ENCODE measurements at regions of chr7 and their contacts with region 1.

Region 1: GRCh38 chr7:139645572-139646523 is 122.4 kb downstream of the CLEC2L start:
- DNase-seq: peak; percentile 65
- ATAC-seq: peak; percentile 59
- H3K4me3 Mint-ChIP-seq: no peak overlapping the region
- H3K27ac Mint-ChIP-seq: no peak overlapping the region
- H3K4me1 Mint-ChIP-seq: peaks cover 39% of the 10 kb centered on the region
- H3K27me3 Mint-ChIP-seq: no peaks in the 10 kb centered on the region
- CTCF ChIP-seq: peak; percentile 79

Region 2: DNA sequence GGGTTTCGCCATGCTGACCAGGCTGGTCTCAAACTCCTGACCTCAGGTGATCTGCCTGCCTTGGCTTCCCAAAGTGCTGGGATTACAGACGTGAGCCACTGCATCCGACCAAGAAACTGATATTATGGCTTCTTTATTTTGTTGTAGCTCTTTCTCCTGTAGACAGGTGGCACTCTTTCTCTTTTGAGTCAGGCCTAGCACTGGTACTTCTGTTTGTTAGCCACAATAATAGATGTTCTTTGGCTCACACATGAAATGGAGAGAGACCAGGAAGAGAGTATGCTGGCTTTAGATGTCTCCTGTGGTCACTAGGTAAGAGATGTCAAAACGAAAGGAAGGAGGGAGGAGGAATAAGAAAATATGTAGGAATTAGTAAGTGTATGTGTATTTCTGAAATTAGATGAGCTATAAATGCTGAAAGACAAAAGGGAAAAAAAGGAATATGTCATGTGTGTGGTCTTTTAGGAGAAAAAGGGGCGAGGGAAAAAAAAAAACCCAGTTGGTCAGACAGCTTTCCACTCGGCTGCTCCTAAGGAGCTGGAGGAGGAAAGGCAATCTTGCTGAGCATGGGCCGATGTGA is 43.6 kb before region 1 on chr7:
- CTCF ChIA-PET with region 1: interaction called, 11 read pairs
- POLR2A ChIA-PET with region 1: no interaction called
- intact Hi-C with region 1: loop called (anchors 2 kb)
- DNase-seq: no peak
- ATAC-seq: no peak
- H3K4me3 Mint-ChIP-seq: no peak overlapping the region
- H3K27ac Mint-ChIP-seq: no peak overlapping the region
- H3K4me1 Mint-ChIP-seq: no peaks in the 10 kb centered on the region
- H3K27me3 Mint-ChIP-seq: no peaks in the 10 kb centered on the region
- CTCF ChIP-seq: no peak

Region 3: DNA sequence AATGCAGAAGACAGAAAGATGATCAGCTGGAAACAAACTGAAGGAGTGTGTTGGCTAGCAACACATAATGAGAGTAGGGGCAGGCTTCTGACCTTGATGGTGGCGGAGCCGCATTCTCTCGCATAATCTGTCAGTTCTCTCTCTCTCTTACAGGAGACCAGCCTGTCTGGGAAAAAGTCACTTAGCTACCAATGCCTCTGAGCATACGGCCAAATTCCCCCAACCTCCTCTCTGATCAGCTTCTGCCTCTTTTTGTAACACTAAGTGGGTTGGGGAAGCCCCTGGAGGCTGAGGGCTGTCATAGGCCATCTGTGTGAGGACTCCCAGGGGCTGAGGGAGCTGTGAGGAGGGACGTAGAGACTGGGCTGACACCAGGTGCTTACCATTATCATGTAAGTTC is 27.4 kb after region 1 on chr7:
- CTCF ChIA-PET with region 1: interaction called, 14 read pairs
- POLR2A ChIA-PET with region 1: interaction called, 5 read pairs
- intact Hi-C with region 1: no loop called
- DNase-seq: no peak
- ATAC-seq: peak; percentile 95
- H3K4me3 Mint-ChIP-seq: peak overlapping the region; percentile 64
- H3K27ac Mint-ChIP-seq: peak overlapping the region; percentile 77
- H3K4me1 Mint-ChIP-seq: peaks cover 37% of the 10 kb centered on the region
- H3K27me3 Mint-ChIP-seq: no peaks in the 10 kb centered on the region
- CTCF ChIP-seq: no peak

Region 4: DNA sequence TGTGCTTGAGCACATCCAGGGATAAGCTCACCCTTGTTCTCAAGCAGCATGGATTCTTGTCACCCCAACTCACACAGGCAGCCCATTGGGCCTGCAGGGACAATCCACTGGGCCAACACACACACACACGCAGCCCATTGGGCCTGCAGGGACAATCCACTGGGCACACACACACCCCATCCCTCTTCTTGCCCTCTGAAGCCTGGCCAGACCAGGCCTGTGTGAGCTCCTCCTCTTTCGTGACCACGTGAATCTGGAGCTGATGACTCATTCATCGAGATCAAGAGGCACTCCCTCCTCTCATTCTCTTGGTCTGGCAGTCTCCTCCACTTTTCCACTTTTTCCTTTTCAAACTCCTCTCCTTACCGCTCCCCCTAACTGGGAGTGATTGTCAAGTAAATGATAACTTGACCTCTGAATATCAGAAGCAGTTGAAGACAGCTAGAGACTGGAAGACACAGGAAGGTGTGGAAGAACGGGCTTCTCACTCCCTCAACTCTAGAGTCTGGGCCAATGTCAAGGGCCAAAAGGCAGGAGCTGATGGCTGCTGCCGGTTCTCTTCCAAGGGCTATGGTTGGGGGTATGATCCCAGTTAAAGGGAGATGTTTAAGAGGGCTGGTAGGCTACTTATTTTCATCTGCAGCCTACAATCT is 42.3 kb after region 1 on chr7:
- CTCF ChIA-PET with region 1: no interaction called
- POLR2A ChIA-PET with region 1: no interaction called
- intact Hi-C with region 1: no loop called
- DNase-seq: no peak
- ATAC-seq: no peak
- H3K4me3 Mint-ChIP-seq: no peak overlapping the region
- H3K27ac Mint-ChIP-seq: no peak overlapping the region
- H3K4me1 Mint-ChIP-seq: peaks cover 8% of the 10 kb centered on the region
- H3K27me3 Mint-ChIP-seq: no peaks in the 10 kb centered on the region
- CTCF ChIP-seq: no peak

Region 5: GRCh38 chr7:139708541-139708940 is 62.7 kb after region 1 on chr7:
- CTCF ChIA-PET with region 1: interaction called, 3 read pairs
- POLR2A ChIA-PET with region 1: interaction called, 5 read pairs
- intact Hi-C with region 1: loop called (anchors 2 kb)
- DNase-seq: peak; percentile 28
- ATAC-seq: peak; percentile 92
- H3K4me3 Mint-ChIP-seq: no peak overlapping the region
- H3K27ac Mint-ChIP-seq: peak overlapping the region; percentile 24
- H3K4me1 Mint-ChIP-seq: peaks cover 42% of the 10 kb centered on the region
- H3K27me3 Mint-ChIP-seq: no peaks in the 10 kb centered on the region
- CTCF ChIP-seq: no peak

Region 6: DNA sequence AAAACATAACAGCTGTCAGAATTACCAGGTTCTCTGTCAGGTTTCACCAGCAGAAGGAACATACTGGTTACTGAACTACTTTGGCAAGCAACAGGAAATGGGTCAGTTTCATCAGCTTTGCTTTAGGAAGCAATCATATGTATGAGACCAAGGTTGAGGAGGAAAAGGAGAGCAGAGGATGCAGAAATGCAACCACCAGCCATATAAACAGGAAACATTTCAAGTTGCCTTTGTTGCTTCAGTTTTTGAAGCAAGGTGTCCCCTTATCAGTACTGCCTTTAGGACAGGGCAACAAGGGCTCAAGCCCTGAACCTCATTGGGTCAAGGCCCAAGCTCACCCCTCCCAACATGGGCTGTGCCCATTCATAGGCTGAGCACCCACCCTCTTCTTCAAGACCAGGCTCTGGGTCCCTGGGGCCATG is 121.7 kb after region 1 on chr7:
- CTCF ChIA-PET with region 1: interaction called, 11 read pairs
- POLR2A ChIA-PET with region 1: no interaction called
- intact Hi-C with region 1: no loop called
- DNase-seq: no peak
- ATAC-seq: peak; percentile 45
- H3K4me3 Mint-ChIP-seq: no peak overlapping the region
- H3K27ac Mint-ChIP-seq: peak overlapping the region; percentile 33
- H3K4me1 Mint-ChIP-seq: peaks cover 42% of the 10 kb centered on the region
- H3K27me3 Mint-ChIP-seq: no peaks in the 10 kb centered on the region
- CTCF ChIP-seq: no peak

Region 7: GRCh38 chr7:140304191-140304799 is 658.4 kb after region 1 on chr7:
- CTCF ChIA-PET with region 1: interaction called, 12 read pairs
- POLR2A ChIA-PET with region 1: no interaction called
- intact Hi-C with region 1: loop called (anchors 1 kb)
- DNase-seq: no peak
- ATAC-seq: peak; percentile 96
- H3K4me3 Mint-ChIP-seq: peak overlapping the region; percentile 39
- H3K27ac Mint-ChIP-seq: peak overlapping the region; percentile 90
- H3K4me1 Mint-ChIP-seq: peaks cover 5% of the 10 kb centered on the region
- H3K27me3 Mint-ChIP-seq: no peaks in the 10 kb centered on the region
- CTCF ChIP-seq: no peak

Region 8: GRCh38 chr7:140342727-140343514 is 697.1 kb after region 1 on chr7:
- CTCF ChIA-PET with region 1: interaction called, 5 read pairs
- POLR2A ChIA-PET with region 1: no interaction called
- intact Hi-C with region 1: loop called (anchors 2 kb)
- DNase-seq: no peak
- ATAC-seq: no peak
- H3K4me3 Mint-ChIP-seq: no peak overlapping the region
- H3K27ac Mint-ChIP-seq: no peak overlapping the region
- H3K4me1 Mint-ChIP-seq: peaks cover 4% of the 10 kb centered on the region
- H3K27me3 Mint-ChIP-seq: no peaks in the 10 kb centered on the region
- CTCF ChIP-seq: no peak

Region 9: GRCh38 chr7:140972876-140973859 is 1327.3 kb after region 1 on chr7:
- CTCF ChIA-PET with region 1: no interaction called
- POLR2A ChIA-PET with region 1: no interaction called
- intact Hi-C with region 1: no loop called
- DNase-seq: no peak
- ATAC-seq: no peak
- H3K4me3 Mint-ChIP-seq: no peak overlapping the region
- H3K27ac Mint-ChIP-seq: no peak overlapping the region
- H3K4me1 Mint-ChIP-seq: no peaks in the 10 kb centered on the region
- H3K27me3 Mint-ChIP-seq: peaks cover 6% of the 10 kb centered on the region
- CTCF ChIP-seq: no peak

Measured in activated B cell treated with CpG ODN at 0.5 μM for 24 hours (primary cell).